Adrenal gland (tissue), 19 donors: ENCODE measurements at regions of chr20 and their contacts with region 1.

Region 1: DNA sequence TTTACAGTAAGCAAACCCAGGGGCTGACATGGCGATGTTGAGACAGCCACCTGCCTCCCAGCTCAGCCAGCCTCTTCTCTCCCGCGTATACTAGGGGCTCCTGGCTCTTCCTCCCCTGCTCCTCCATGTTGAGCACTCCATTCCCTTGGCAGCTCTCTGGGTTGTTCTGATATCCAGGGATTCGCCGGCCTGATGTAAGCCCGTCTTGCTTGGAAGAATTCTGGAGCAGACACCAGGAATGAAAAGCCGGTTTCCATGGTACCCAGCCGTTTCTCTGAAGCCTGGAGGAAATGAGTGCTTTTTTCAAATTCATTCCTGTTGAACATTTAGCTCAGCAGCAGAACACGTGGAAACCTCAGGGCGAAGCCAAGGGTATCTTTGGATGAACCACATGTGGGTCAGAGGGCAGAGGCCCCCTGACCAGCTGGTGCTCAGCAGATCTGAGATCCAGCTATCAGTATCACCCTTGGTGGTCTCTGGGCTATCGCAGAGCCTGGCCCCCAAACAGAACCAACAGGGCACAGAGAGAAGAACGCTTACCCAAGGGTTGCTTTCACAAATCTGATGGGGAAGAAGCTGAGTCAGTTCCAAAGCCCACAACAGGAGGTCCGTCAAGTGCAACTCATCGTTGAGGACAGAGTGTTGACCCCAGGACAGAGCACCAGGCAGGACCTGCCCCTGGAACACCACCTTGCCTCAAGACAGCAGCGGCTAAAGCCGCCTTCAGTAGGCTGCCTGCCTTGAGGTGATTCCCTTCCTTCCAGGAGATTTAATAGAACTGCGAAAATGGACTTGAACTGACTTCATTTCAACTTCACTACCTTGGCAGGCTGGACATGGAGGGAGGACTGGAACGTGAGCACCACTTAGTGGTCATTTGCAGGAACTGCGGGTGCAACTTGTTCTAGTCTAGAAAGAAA is 96.1 kb upstream of the RIN2 start:
- DNase-seq: peak; percentile 53 to 87 (median 73)
- H3K4me3 ChIP-seq: no peak overlapping the region
- H3K27ac ChIP-seq: no peak overlapping the region
- H3K4me1 ChIP-seq: no peaks in the 10 kb centered on the region
- H3K27me3 ChIP-seq: peaks cover 10% of the 10 kb centered on the region
- CTCF ChIP-seq: peak; percentile 94 to 100 (median 97)
- POLR2A ChIP-seq: no peak

Region 2: DNA sequence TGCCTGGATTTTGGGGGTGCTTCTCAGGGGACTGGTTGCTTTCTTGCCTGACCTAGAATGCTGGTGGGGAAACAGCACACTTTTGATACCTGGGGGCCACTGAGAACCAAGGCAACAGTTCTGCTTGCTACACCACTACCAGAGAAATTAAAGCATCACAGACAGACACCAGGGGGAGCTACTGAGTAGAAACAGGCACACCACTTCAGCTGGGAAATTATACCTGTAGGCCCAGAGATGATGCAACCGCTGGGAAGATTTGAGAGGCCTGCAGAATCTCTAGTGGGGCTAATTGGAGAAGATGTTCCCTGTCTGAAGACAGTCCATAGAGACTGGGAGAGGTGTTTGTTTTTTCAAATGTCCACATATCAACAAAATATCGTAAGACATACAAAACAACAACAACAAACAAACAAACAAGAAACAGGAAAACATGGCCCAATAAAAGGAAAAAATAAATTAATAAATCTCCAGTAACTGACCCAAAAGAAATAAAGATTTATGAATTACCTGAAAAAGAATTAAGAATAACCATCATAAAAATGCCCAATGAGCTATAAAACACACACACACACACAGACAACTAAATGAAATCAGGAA is 33.3 kb before region 1 on chr20:
- intact Hi-C with region 1: loop called in 1 of 2 experiments (anchors 5 kb)
- DNase-seq: peak; percentile 51 to 84 (median 70)
- H3K4me3 ChIP-seq: no peak overlapping the region
- H3K27ac ChIP-seq: no peak overlapping the region
- H3K4me1 ChIP-seq: no peaks in the 10 kb centered on the region
- H3K27me3 ChIP-seq: no peaks in the 10 kb centered on the region
- CTCF ChIP-seq: peak; percentile 57 to 69 (median 68)
- POLR2A ChIP-seq: no peak